Activated CD8-positive, alpha-beta memory T cell treated with anti-CD3 and anti-CD28 coated beads, Interleukin-2, amount 10 ng/mL, durations not matched to agents 7 days and 5 days (primary cell): ENCODE measurements at regions of chr20 and their contacts with region 1.

Region 1: GRCh38 chr20:54207743-54208547 is at the start of gene PFDN4:
- DNase-seq: peak; percentile 85
- ATAC-seq: peak; percentile 94
- H3K4me3 Mint-ChIP-seq: peak within 1 kb of the TSS; percentile 90
- H3K27ac Mint-ChIP-seq: peak within 1 kb of the TSS; percentile 99
- H3K4me1 Mint-ChIP-seq: peaks cover 24% of the 10 kb centered on the region
- H3K27me3 Mint-ChIP-seq: no peaks in the 10 kb centered on the region
- total RNA-seq, gene PFDN4: 20.7 to 25.5 TPM

Region 2: GRCh38 chr20:54044156-54044555 is 163.8 kb before region 1 on chr20:
- CTCF ChIA-PET with region 1: no interaction called
- DNase-seq: no peak
- ATAC-seq: peak; percentile 51
- H3K4me3 Mint-ChIP-seq: no peak overlapping the region
- H3K27ac Mint-ChIP-seq: no peak overlapping the region
- H3K4me1 Mint-ChIP-seq: peaks cover 17% of the 10 kb centered on the region
- H3K27me3 Mint-ChIP-seq: peaks cover 9% of the 10 kb centered on the region

Region 3: GRCh38 chr20:54078296-54078984 is 129.5 kb before region 1 on chr20:
- CTCF ChIA-PET with region 1: interaction called, 10 read pairs
- DNase-seq: peak; percentile 77
- ATAC-seq: peak; percentile 79
- H3K4me3 Mint-ChIP-seq: peak overlapping the region; percentile 53
- H3K27ac Mint-ChIP-seq: peak overlapping the region; percentile 90
- H3K4me1 Mint-ChIP-seq: peaks cover 33% of the 10 kb centered on the region
- H3K27me3 Mint-ChIP-seq: peaks cover 2% of the 10 kb centered on the region

Region 4: GRCh38 chr20:54093423-54094267 is 114.3 kb before region 1 on chr20:
- CTCF ChIA-PET with region 1: interaction called, 73 read pairs
- DNase-seq: no peak
- ATAC-seq: no peak
- H3K4me3 Mint-ChIP-seq: no peak overlapping the region
- H3K27ac Mint-ChIP-seq: no peak overlapping the region
- H3K4me1 Mint-ChIP-seq: peaks cover 4% of the 10 kb centered on the region
- H3K27me3 Mint-ChIP-seq: peaks cover 7% of the 10 kb centered on the region

Region 5: DNA sequence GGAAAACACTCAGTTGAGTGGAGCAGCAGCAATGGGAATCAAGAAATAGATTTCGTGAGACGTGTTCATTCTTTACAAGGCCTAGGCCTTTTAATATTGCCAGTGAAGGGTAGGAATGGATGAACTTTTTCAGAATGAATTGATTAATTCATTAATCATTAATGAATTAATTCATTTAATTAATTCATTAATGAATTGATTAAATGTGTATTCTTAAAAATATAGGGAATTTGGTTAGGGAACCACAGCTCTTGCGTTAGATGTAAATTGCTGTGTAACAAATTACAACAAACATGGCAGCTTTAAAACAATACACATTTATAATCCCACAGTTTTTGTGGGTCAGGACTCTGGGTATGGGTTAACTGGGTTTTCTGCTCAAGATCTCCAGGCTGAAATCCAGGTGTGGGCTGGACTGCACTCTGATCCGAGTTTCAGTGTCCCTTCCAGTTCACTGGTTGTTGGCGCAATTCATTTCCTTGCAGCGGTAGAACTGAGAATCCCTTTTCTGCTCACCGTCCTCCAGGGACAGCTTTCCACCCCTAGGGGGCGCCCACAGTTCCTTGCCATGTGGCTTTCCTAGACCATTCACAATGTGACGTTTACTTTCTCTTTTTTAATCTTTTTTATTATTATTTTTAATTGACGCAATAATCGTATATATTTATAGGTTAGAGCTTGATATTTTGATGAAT is 104.7 kb before region 1 on chr20:
- CTCF ChIA-PET with region 1: interaction called, 73 read pairs
- DNase-seq: peak; percentile 84
- ATAC-seq: peak; percentile 78
- H3K4me3 Mint-ChIP-seq: no peak overlapping the region
- H3K27ac Mint-ChIP-seq: no peak overlapping the region
- H3K4me1 Mint-ChIP-seq: peaks cover 2% of the 10 kb centered on the region
- H3K27me3 Mint-ChIP-seq: peaks cover 4% of the 10 kb centered on the region

Region 6: DNA sequence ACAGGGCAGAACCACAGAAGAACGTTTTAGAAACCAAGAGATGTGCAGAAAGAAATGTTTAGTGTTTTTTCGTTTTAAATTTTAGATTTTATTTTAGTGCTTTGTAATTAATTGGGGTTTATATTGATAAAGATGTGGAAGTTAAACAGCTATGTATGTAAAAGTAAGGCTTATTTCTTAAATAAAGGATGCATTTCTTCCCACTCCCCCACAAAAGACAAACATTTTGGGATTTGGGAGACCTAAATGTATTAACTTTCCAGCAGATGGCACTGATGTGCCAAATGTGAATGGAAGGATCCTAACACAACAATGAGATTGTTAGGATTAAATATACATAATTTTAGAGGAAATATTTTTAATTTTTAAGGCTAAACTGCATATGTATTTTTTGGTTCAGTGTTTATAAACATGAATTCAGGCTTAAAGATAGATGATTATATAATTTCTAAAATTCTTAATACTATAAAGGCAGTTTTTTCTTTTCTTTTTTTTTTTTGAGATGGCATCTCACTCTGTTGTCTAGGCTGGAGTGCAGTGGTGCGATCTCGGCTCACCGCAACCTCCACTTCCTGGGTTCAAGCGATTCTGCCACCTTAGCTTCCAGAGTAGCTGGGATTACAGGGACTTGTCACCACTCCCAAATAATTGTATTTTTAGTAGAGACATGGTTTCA is 11.9 kb after region 1 on chr20:
- CTCF ChIA-PET with region 1: interaction called, 18 read pairs
- DNase-seq: no peak
- ATAC-seq: no peak
- H3K4me3 Mint-ChIP-seq: no peak overlapping the region
- H3K27ac Mint-ChIP-seq: no peak overlapping the region
- H3K4me1 Mint-ChIP-seq: peaks cover 18% of the 10 kb centered on the region
- H3K27me3 Mint-ChIP-seq: no peaks in the 10 kb centered on the region